Spleen (tissue), 13 donors: ENCODE measurements at regions of chr17 and their contacts with region 1.

Region 1: GRCh38 chr17:27879987-27880608 is 13.1 kb downstream of the LYRM9 start:
- DNase-seq: peak; percentile 85
- H3K4me3 ChIP-seq: no peak overlapping the region
- H3K27ac ChIP-seq: no peak overlapping the region
- H3K4me1 ChIP-seq: peaks cover 0 to 25% (median 8%) of the 10 kb centered on the region in 6 donors
- H3K27me3 ChIP-seq: no peaks in the 10 kb centered on the region
- CTCF ChIP-seq: peak; percentile 55 to 89 (median 84)
- POLR2A ChIP-seq: no peak

Region 2: DNA sequence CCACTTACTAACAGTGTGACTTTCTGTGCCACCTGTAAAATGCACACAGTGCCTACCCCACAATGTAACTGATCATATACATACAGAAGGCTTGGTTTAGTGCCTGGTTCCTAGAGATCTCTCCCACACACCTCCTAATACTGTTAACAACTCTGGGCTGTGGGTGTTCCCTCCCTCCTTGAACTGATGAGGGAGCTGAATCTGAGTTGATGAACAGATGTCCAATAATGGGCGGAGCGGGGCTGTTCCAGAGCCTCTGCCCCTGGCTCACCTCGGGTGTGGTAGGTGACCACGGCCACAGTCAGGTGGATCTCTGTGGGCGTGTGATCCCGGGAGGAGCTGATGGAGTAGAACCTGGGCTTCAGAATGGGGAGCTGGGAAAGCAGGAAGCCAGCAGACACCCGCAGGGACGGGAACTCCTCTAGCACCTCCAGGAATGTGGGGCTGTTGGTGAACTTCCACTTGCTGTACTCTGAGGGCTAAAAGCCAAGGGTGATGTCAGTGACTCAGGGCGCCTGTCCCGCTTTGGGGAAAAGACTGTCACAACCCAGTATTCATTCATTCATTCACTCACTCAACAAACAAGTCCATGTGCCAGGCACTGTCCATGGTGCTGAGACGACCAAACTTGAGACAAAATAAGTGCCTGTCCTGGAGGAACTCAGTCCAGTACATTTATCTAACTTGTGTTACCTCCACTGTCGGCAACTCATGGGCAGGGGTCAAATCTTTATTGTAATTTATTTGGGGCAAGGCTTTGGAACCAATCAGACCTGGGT is 117.4 kb before region 1 on chr17:
- intact Hi-C with region 1: loop called (anchors 2 kb)
- DNase-seq: no peak
- H3K4me3 ChIP-seq: no peak overlapping the region
- H3K27ac ChIP-seq: no peak overlapping the region
- H3K4me1 ChIP-seq: peaks cover 0 to 7% (median 0%) of the 10 kb centered on the region in 6 donors
- H3K27me3 ChIP-seq: peaks cover 0 to 11% (median 0%) of the 10 kb centered on the region in 7 donors
- CTCF ChIP-seq: no peak
- POLR2A ChIP-seq: no peak

Region 3: GRCh38 chr17:27800522-27800921 is 79.6 kb before region 1 on chr17 and contains the start of gene NOS2:
- intact Hi-C with region 1: loop called (anchors 5 kb)
- DNase-seq: peak; percentile 1
- H3K4me3 ChIP-seq: no peak within 1 kb of the TSS
- H3K27ac ChIP-seq: no peak within 1 kb of the TSS
- H3K4me1 ChIP-seq: peaks cover 0 to 6% (median 5%) of the 10 kb centered on the region in 6 donors
- H3K27me3 ChIP-seq: peaks cover 0 to 18% (median 0%) of the 10 kb centered on the region in 7 donors
- CTCF ChIP-seq: no peak
- POLR2A ChIP-seq: no peak
- total RNA-seq, gene NOS2: 0.12 to 0.69 (median 0.32) TPM in 6 of 7 donors, not detected in the other